Dendritic cell treated with granulocyte-macrophage colony-stimulating factor and Interleukin-4, amounts not matched to agents 40 ng/mL and 50 ng/mL, for 4 days (primary cell): ENCODE measurements at regions of chr1 and their contacts with region 1.

Region 1: DNA sequence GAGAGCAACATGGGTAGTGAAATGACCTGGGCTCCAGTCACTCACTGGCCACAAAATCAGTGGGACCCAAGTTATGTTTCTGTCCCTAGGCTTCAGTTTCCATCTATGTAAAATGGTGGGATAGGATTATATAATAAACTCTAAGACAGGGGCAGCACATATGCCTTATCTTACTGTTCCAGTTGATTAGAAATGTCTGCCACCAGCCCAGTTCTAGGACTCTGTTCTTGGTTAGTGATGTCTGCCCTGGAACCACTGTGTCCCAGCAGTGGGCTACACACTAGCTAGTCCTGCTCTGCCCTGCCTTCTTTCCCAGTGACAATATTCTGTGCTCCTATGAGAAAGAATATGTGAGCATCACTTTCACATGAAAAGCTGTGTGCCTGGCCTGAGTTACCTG is 138.3 kb downstream of the PCNX2 start:
- H3K4me3 Mint-ChIP-seq: no peak overlapping the region
- H3K27ac Mint-ChIP-seq: no peak overlapping the region
- H3K4me1 Mint-ChIP-seq: peaks cover 5% of the 10 kb centered on the region
- H3K27me3 Mint-ChIP-seq: no peaks in the 10 kb centered on the region

Region 2: DNA sequence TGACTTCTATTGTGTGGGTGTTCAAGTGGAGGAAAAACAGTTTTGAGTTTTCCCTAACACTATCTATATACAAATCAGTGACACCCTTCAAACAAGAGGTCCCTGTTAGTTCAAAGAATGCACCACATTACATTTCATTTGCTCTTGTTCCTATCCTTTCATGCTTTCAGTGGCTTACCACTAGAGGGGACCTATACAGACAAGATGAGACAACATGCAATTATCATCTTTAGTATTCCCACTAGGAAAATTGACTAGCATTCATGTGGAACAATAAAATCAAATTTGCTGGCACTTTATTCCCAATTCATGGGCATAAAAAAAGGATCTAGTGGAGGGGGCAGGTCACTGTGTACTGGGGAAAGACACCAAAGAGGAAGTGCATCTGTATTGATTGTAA is 514.0 kb before region 1 on chr1:
- intact Hi-C with region 1: no loop called
- H3K4me3 Mint-ChIP-seq: no peak overlapping the region
- H3K27ac Mint-ChIP-seq: no peak overlapping the region
- H3K4me1 Mint-ChIP-seq: no peaks in the 10 kb centered on the region
- H3K27me3 Mint-ChIP-seq: no peaks in the 10 kb centered on the region

Region 3: GRCh38 chr1:233038581-233038980 is 118.7 kb before region 1 on chr1:
- intact Hi-C with region 1: loop called (anchors 5 kb)
- H3K4me3 Mint-ChIP-seq: no peak overlapping the region
- H3K27ac Mint-ChIP-seq: no peak overlapping the region
- H3K4me1 Mint-ChIP-seq: no peaks in the 10 kb centered on the region
- H3K27me3 Mint-ChIP-seq: no peaks in the 10 kb centered on the region

Region 4: DNA sequence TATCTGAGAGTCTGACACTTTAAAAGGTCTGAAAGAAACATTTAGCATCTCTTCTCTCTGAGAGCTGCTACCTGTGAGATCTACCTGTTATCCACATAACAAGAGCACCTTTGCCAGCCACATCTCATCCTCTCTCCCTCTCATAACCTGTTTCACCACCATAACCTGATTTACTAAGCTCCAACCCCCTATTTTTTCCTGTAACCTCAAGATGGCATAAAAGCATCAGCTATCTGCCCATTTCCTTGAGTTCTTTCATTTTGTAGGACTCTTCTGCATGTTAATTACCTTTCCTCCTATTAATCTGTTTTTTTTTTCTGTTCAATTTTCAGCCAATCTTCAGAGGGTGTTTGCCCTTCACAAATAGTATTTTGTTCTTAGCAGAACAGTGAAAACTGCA is 320.1 kb after region 1 on chr1:
- intact Hi-C with region 1: no loop called
- H3K4me3 Mint-ChIP-seq: no peak overlapping the region
- H3K27ac Mint-ChIP-seq: peak overlapping the region; percentile 48
- H3K4me1 Mint-ChIP-seq: peaks cover 34% of the 10 kb centered on the region
- H3K27me3 Mint-ChIP-seq: peaks cover 8% of the 10 kb centered on the region